PC-9 (cell line): ENCODE measurements at regions of chr2 and their contacts with region 1.

Region 1: GRCh38 chr2:119109866-119110265 is 48.7 kb downstream of the C1QL2 start:
- DNase-seq: no peak
- H3K4me3 ChIP-seq: no peak overlapping the region
- H3K27ac ChIP-seq: no peak overlapping the region
- H3K4me1 ChIP-seq: peaks cover 10% of the 10 kb centered on the region
- H3K27me3 ChIP-seq: no peaks in the 10 kb centered on the region
- CTCF ChIP-seq: no peak

Region 2: GRCh38 chr2:119126650-119127049 is 16.8 kb after region 1 on chr2:
- CTCF ChIA-PET with region 1: interaction called, 10 read pairs
- POLR2A ChIA-PET with region 1: no interaction called
- intact Hi-C with region 1: no loop called
- DNase-seq: peak in 1 of 2 experiments; percentile 7
- H3K4me3 ChIP-seq: no peak overlapping the region
- H3K27ac ChIP-seq: no peak overlapping the region
- H3K4me1 ChIP-seq: no peaks in the 10 kb centered on the region
- H3K27me3 ChIP-seq: no peaks in the 10 kb centered on the region
- CTCF ChIP-seq: peak; percentile 74